ENCODE measurements at regions of chr5 and their contacts with region 1.

Region 1: DNA sequence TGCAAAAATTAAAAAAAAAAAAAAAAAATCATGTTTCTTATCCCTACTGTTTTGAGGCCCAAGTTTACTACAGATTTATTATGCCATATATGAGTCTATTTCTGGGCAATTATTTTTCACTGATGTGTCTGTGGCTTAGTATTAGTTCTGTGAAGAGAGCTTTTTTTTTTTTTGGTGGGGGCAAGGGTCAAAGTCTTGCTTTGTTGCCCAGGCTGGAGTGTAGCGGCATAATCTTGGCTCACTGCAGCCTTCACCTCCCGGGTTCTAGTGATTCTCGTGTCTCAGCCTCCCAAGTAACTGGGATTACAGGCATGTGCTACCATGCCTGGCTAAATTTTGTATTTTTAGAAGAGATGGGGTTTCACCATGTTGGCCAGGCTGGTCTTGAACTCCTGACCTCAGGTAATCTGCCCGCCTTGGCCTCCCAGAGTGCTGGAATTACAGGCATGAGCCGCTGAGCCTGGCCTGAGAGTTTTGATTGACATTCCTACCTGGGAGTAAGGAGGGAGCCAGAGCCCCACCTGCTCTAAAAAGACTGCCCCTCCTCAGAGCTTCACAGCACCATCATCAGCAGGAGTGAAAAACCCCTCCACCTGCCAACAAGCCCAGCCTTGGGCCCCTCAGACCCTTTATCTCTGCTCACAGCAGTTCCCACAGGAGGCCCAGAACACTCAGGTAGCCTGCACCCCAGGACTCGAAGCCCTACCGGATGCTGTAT is 36.1 kb upstream of the JADE2 start:
- DNase-seq: no peak
- ATAC-seq: no peak
- H3K4me3 ChIP-seq: no peak overlapping the region
- H3K27ac ChIP-seq: no peak overlapping the region
- H3K4me1 ChIP-seq: no peaks in the 10 kb centered on the region
- H3K27me3 ChIP-seq: no peaks in the 10 kb centered on the region
- CTCF ChIP-seq: no peak

Region 2: GRCh38 chr5:134145779-134146581 is 343.4 kb before region 1 on chr5:
- intact Hi-C with region 1: no loop called
- DNase-seq: peak; percentile 73 to 75
- ATAC-seq: peak; percentile 69 to 91 (median 84)
- H3K4me3 ChIP-seq: no peak overlapping the region
- H3K27ac ChIP-seq: no peak overlapping the region
- H3K4me1 ChIP-seq: peaks cover 4 to 49% (median 24%) of the 10 kb centered on the region in 9 donors
- H3K27me3 ChIP-seq: no peaks in the 10 kb centered on the region
- CTCF ChIP-seq: peak; percentile 92 to 98 (median 95)

Region 3: DNA sequence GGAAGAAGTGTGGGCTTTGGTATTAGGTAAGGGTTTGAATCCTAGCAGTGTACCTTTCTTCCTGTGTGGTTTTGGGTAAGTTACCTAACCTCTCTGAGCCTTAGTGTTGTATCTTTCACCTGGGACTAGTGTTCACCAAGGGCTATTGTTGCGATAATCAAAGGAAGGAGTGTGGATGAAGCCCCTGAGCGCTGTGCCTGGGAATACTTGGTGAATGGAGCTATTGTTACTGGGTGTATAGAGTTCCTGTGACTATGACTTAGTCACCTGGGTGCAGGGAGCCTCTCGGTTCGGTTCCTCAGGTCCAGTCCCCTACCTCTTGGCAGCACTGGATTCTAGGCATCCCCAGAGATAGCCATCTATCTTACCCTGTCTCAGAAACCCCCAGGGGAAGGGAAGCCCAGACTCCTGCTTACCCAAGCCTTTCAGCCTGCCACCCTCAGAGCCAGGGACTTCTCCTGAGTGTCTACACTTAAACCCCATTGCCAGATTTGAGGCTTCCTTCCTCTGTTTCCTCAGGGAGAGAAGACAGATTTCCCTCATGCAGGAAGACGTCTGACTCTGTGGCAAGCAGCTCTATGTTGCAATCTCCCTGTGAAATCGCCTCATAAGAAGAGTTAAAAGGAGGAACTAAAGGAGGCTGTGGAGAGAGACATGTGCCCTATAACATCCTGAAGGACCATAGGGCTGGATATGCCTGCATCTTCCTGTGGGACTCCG is 725.7 kb after region 1 on chr5:
- intact Hi-C with region 1: loop called in 1 of 10 experiments (anchors 10 kb)
- DNase-seq: no peak
- ATAC-seq: peak in 4 of 8 donors; percentile 21 to 56 (median 40)
- H3K4me3 ChIP-seq: no peak overlapping the region
- H3K27ac ChIP-seq: no peak overlapping the region
- H3K4me1 ChIP-seq: peaks cover 0 to 10% (median 0%) of the 10 kb centered on the region in 9 donors
- H3K27me3 ChIP-seq: peaks cover 0 to 7% (median 0%) of the 10 kb centered on the region in 7 donors
- CTCF ChIP-seq: no peak

Measured in heart right ventricle (tissue), 16 donors.